ENCODE measurements at regions of chr16 and their contacts with region 1.

Region 1: GRCh38 chr16:75798714-75799113 is 72.4 kb upstream of the CPHXL start:
- DNase-seq: no peak
- H3K4me3 ChIP-seq: no peak overlapping the region
- H3K27ac ChIP-seq: no peak overlapping the region
- H3K4me1 ChIP-seq: no peaks in the 10 kb centered on the region
- H3K27me3 ChIP-seq: no peaks in the 10 kb centered on the region
- CTCF ChIP-seq: no peak
- POLR2A ChIP-seq: no peak

Region 2: GRCh38 chr16:77171745-77172635 is 1373.3 kb after region 1 on chr16:
- intact Hi-C with region 1: loop called (anchors 5 kb)
- DNase-seq: no peak
- H3K4me3 ChIP-seq: no peak overlapping the region
- H3K27ac ChIP-seq: no peak overlapping the region
- H3K4me1 ChIP-seq: no peaks in the 10 kb centered on the region
- H3K27me3 ChIP-seq: no peaks in the 10 kb centered on the region
- CTCF ChIP-seq: peak in 2 of 3 experiments; percentile 61 to 64
- POLR2A ChIP-seq: no peak

Measured in vagina (tissue), 2 donors.